Prostate gland (tissue), 2 donors: ENCODE measurements at regions of chr11 and their contacts with region 1.

Region 1: DNA sequence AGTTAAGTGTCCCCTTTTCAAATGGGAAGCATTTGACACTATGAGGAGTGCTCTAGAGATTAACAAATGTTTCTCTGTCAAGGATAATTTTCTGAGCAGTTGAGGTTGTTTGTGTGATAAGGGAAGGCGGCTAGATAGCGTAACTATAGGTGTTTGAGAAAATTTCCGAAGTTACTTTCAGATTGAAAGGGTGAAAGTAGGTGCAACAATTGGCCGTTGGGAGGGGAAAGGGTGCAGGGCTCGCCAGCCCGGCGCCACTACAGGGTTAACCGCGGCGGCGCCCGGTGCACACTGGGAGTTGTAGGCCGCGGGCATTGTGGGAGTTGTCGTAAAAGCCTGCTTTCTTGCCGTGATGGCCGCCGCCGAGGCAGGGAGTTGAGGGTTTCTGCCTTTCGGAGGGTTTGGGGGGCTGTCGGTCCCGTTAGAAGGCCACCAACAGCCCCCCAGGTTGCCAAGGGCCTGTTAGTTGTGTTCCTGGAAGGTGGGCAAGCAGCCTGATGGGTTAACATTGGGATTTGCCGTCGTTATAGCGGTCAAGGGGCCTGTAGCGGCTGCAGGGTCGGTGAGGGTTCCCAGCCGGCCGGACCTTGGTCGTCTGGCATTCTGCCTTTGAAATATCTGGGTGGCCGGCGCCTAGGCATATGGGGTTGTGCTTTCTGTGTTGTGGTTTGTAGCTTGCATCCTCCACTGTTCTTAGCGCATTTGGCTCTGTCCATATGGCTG is 36.5 kb upstream of the HSD17B12 start:
- DNase-seq: peak; percentile 82
- H3K4me3 ChIP-seq: peak overlapping the region; percentile 80 to 81
- H3K27ac ChIP-seq: peak overlapping the region; percentile 68 to 72
- H3K4me1 ChIP-seq: no peaks in the 10 kb centered on the region
- H3K27me3 ChIP-seq: no peaks in the 10 kb centered on the region
- CTCF ChIP-seq: peak in 2 of 4 experiments; percentile 8 to 25
- POLR2A ChIP-seq: no peak

Region 2: DNA sequence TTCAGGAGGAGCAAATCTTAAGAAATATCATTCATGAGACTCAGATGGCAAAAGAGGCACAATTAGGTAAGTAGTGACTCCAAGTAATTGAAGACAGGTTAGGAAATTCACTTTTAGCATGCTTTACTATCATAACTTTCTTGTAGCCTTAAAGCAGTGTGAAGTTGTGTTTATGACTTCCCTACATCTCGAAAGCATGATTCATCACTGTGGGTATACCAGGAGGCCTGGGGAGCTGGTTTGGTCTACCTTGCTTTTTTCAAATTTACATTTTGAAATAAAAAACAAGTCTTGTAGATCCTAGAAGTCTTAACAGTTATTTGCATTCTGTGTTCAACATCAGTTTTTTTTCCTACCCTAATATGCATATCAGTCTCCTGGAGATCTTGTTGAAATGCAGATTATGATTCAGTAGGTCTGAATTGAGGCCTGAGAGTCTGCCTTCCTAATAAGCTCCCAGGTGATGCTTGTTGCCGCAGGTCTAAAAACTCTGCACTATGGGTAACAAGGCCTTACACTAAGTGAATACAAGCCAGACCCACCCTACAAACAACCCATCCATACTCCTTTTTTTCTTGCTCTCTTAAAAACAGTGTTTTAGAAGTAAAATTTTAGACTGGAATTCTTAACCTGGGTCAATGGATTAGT is 244.0 kb before region 1 on chr11:
- intact Hi-C with region 1: no loop called
- DNase-seq: no peak
- H3K4me3 ChIP-seq: no peak overlapping the region
- H3K27ac ChIP-seq: no peak overlapping the region
- H3K4me1 ChIP-seq: no peaks in the 10 kb centered on the region
- H3K27me3 ChIP-seq: no peaks in the 10 kb centered on the region
- CTCF ChIP-seq: no peak
- POLR2A ChIP-seq: no peak

Region 3: DNA sequence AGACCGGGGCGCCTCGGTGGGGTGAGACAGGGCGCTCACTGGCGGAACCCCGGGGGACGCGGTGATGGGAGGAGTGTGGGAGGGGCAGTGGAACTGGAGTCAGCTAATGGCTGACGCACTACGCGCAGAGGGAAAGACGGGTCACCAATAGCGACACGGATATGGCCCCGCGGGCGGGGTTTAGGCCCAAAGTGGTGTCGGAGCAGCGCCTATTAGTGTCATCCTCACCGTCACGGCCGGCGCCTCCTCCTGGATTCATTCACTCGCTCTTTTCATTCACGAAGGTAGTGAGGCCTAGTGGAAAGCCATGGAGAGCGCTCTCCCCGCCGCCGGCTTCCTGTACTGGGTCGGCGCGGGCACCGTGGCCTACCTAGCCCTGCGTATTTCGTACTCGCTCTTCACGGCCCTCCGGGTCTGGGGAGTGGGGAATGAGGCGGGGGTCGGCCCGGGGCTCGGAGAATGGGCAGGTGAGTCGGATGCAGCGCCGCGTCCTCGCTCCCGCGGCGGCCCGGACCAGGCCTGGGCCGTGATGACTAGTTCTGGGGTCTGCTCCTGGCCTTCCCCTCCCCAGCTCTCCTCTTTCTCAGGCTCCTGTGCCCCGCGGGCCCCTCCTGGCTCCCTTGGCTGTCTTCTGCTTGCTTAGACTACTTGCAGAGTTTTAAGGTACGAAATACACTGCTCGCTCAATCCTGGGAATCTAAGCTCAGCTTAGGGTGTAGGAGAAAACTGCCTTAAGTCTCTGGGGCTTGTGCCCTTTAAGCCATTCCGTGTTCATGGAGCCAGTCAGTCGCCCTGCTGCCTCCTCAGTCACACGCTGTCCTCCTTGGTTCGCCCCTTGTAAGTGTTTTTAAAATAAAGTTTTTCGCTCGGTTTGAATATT is 36.7 kb after region 1 on chr11 and contains the start of gene HSD17B12:
- intact Hi-C with region 1: loop called (anchors 2 kb)
- DNase-seq: peak; percentile 99
- H3K4me3 ChIP-seq: peak within 1 kb of the TSS; percentile 67 to 72
- H3K27ac ChIP-seq: peak within 1 kb of the TSS; percentile 86
- H3K4me1 ChIP-seq: no peaks in the 10 kb centered on the region
- H3K27me3 ChIP-seq: no peaks in the 10 kb centered on the region
- CTCF ChIP-seq: peak in 1 of 4 experiments; percentile 19
- POLR2A ChIP-seq: peak; percentile 90
- total RNA-seq, gene HSD17B12: 59.9 to 102 TPM